ENCODE measurements at regions of chr19 and their contacts with region 1.

Region 1: DNA sequence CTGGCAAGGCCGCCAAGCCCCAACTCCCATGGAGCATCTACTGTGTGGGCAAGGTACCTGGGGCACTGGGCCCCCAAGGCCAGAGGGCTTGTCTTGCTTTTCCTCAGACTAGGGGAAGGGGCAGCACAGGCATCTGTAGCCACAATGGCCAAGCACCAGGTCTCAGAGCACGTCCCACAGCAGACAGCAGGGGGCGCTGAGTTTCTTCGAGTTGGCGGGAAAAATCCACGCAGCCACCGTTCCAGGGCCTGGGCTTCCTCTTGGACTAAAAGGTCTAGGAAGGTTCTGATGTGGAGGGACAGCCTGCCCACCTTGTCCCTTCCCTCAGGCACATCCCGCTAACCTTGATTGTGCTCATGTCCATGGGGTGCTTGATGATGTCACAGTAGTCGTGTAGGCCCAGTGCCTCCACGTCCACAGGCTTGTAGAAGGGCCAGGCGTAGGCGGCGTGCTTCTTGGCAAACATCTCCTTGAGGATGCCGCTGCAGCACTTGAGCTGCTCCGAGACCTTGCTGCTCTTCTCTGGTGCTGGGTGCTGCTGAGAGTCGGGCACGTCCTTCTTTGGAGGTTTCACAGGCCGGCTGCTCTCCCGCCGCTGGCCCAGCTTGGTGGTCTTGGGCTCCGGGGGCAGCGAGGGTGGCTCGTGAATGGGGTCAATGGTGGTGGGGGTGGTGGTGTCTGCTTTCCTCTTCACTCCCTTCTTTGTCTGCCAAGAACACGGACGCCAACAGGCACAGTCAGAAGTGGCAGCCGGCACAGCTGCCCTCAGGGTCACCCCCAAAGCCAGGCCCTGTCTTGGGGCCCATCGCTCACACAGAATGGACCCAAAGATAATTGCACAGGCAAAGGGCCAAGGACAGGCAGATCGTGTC is 32.0 kb upstream of the EPHX3 start:
- DNase-seq: peak; percentile 91
- H3K4me3 ChIP-seq: no peak overlapping the region
- H3K27ac ChIP-seq: peak overlapping the region; percentile 66 to 89 (median 76)
- H3K4me1 ChIP-seq: peaks cover 0 to 62% (median 58%) of the 10 kb centered on the region in 4 donors
- H3K27me3 ChIP-seq: no peaks in the 10 kb centered on the region
- CTCF ChIP-seq: peak; percentile 75 to 89 (median 84)
- EP300 ChIP-seq: no peak
- POLR2A ChIP-seq: no peak

Region 2: GRCh38 chr19:15280915-15281683 is 16.8 kb after region 1 on chr19:
- intact Hi-C with region 1: loop called (anchors 2 kb)
- DNase-seq: peak; percentile 94
- H3K4me3 ChIP-seq: no peak overlapping the region
- H3K27ac ChIP-seq: peak overlapping the region; percentile 47 to 78 (median 76)
- H3K4me1 ChIP-seq: peaks cover 0 to 100% (median 99%) of the 10 kb centered on the region in 4 donors
- H3K27me3 ChIP-seq: no peaks in the 10 kb centered on the region
- CTCF ChIP-seq: no peak
- EP300 ChIP-seq: no peak
- POLR2A ChIP-seq: no peak

Region 3: GRCh38 chr19:15332311-15332996 is 68.2 kb after region 1 on chr19 and contains the start of gene BRD4:
- intact Hi-C with region 1: loop called (anchors 2 kb)
- DNase-seq: peak; percentile 85
- H3K4me3 ChIP-seq: peak within 1 kb of the TSS; percentile 86 to 94 (median 88)
- H3K27ac ChIP-seq: peak within 1 kb of the TSS; percentile 91 to 97 (median 96)
- H3K4me1 ChIP-seq: peaks cover 0 to 47% (median 44%) of the 10 kb centered on the region in 4 donors
- H3K27me3 ChIP-seq: no peaks in the 10 kb centered on the region
- CTCF ChIP-seq: no peak
- EP300 ChIP-seq: no peak
- POLR2A ChIP-seq: no peak
- total RNA-seq, gene BRD4: 15.0 to 43.8 (median 21.4) TPM

Region 4: GRCh38 chr19:15354566-15355296 is 90.4 kb after region 1 on chr19:
- intact Hi-C with region 1: no loop called
- DNase-seq: no peak
- H3K4me3 ChIP-seq: no peak overlapping the region
- H3K27ac ChIP-seq: no peak overlapping the region
- H3K4me1 ChIP-seq: no peaks in the 10 kb centered on the region
- H3K27me3 ChIP-seq: no peaks in the 10 kb centered on the region
- CTCF ChIP-seq: no peak
- EP300 ChIP-seq: no peak
- POLR2A ChIP-seq: no peak

Region 5: DNA sequence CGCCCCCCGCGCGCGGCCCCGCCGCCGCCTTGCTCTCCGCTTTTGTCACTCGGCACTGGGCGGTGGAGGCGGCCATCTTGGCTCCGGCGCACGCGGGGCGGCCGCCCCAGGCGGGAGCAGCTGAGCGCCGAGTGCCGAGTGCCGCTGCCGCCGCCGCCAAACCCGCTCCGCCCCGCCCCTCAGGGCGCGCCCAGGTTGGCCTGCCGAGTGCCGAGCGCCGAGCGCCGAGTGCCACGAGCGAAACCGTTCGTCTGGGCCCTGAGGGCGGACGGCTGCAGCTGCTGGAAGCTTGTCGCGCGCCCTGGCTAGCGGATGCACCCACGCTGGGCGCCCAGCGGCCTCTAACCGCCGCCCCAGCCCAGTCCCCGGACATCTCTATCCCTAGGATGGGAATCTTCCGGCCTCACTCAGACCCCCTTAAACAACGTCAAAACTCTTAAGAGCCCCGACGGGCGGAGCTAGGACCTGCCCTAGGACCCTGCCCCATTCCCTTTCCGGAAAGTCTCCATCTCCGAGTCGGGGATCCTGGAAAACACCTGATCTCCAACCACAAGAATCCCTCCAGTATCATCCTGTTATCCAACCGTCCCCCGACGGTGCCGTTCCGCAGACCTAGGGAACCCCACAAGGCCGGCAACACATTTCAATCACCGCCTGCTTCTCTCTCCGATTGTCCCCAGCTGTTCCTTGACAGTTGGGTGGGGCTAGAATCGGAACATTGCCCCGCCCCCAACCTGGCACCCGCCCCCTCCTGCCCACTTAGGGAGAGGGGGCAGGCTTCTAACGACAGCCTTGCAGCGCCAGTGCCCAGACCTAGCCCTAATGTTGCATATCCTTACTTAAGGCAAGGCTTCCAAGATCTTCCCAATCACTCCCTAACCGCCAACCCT is 168.6 kb after region 1 on chr19:
- intact Hi-C with region 1: loop called (anchors 5 kb)
- DNase-seq: peak; percentile 93
- H3K4me3 ChIP-seq: peak overlapping the region; percentile 58 to 99 (median 92)
- H3K27ac ChIP-seq: peak overlapping the region; percentile 84 to 95 (median 88)
- H3K4me1 ChIP-seq: peaks cover 0 to 52% (median 42%) of the 10 kb centered on the region in 4 donors
- H3K27me3 ChIP-seq: no peaks in the 10 kb centered on the region
- CTCF ChIP-seq: no peak
- EP300 ChIP-seq: no peak
- POLR2A ChIP-seq: no peak

Region 6: DNA sequence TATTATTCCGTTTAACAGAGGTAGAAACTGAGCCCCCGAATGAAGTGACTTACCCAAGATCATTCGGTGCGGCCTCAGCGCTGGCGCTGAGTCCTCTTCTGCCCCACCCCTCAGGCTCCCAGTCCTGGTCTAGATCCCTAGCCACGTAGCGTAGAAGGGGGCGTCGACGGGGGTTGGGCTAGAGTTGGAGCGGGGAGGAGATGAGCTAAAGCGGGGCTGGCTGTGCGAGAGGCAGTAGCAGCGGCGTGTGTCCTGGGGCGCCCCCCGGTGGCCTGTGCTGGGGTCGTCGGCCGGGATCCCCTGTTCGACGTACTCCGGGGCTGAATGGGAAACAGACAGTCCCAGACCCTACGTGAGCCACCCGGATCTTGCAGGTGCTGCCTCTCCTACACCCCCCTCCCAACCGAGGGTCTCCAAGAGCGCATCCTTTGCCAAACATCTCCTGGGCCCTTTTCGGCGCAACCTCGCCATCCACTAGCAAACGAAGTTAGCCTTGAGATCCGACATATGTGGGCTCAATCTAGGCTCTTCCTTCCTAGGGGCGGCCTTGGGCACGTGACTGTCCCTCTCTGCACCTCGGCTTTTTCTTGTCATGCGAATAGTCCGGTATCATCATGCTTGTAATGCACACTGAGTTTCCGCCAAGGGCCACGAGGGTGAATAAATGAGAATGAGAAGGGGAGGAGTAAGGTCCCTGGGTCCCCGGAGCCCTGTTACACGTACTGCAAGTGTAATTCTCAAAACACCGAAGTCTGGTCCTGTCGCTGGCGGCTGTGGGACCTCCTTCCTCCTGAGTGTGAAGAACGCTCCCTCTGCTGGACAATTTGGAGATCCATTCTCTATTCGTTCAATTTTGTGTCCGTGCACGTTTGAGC is 291.7 kb after region 1 on chr19:
- intact Hi-C with region 1: loop called (anchors 5 kb)
- DNase-seq: peak; percentile 93
- H3K4me3 ChIP-seq: peak overlapping the region in 2 of 4 donors; percentile 31 to 40
- H3K27ac ChIP-seq: peak overlapping the region in 3 of 4 donors; percentile 35 to 69 (median 41)
- H3K4me1 ChIP-seq: peaks cover 0 to 20% (median 18%) of the 10 kb centered on the region in 4 donors
- H3K27me3 ChIP-seq: peaks cover 4 to 37% (median 16%) of the 10 kb centered on the region in 3 donors
- CTCF ChIP-seq: peak; percentile 73 to 84 (median 80)
- EP300 ChIP-seq: no peak
- POLR2A ChIP-seq: no peak